CD8-positive, alpha-beta memory T cell (primary cell): ENCODE measurements at regions of chr3 and their contacts with region 1.

Region 1: DNA sequence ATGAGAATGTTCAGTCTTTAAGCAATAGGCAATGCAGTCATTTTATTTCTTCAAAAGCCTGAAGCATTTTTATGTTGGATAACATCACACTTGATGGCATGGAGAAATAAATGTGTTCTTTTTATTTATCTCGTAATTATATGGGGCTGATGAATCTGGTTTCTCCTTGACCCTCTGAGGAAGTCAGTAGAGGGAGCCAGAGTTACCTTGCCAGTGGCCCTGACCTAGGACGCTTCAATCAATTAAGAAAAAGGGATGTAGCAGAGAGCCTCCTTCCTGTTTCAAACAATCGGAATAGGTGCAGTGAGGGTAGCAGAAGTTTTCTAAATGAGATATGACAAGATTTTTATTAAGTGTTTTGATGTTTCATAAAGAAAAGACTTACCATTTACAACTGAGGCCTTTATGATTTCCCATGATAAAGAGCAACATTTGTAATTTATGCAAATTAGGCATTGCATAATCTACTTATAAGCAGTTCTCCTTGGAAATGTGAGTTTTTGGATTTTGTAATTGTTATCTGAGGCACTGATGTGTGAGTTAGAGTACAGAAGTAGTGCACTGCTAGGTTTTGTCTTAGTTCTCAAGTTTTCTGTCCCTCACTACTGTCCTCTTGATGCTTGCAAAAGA is 129.1 kb downstream of the RAP2B start:
- DNase-seq: peak in 1 of 5 donors; percentile 11
- H3K4me3 ChIP-seq: no peak overlapping the region
- H3K4me3 Mint-ChIP-seq: peak overlapping the region in 2 of 7 donors; percentile 10 to 50
- H3K27ac ChIP-seq: no peak overlapping the region
- H3K27ac Mint-ChIP-seq: peak overlapping the region in 3 of 8 donors; percentile 3 to 72 (median 56)
- H3K4me1 ChIP-seq: peaks cover 34% of the 10 kb centered on the region
- H3K4me1 Mint-ChIP-seq: peaks cover 38 to 50% (median 50%) of the 10 kb centered on the region in 3 donors
- H3K27me3 ChIP-seq: no peaks in the 10 kb centered on the region
- H3K27me3 Mint-ChIP-seq: no peaks in the 10 kb centered on the region

Region 2: DNA sequence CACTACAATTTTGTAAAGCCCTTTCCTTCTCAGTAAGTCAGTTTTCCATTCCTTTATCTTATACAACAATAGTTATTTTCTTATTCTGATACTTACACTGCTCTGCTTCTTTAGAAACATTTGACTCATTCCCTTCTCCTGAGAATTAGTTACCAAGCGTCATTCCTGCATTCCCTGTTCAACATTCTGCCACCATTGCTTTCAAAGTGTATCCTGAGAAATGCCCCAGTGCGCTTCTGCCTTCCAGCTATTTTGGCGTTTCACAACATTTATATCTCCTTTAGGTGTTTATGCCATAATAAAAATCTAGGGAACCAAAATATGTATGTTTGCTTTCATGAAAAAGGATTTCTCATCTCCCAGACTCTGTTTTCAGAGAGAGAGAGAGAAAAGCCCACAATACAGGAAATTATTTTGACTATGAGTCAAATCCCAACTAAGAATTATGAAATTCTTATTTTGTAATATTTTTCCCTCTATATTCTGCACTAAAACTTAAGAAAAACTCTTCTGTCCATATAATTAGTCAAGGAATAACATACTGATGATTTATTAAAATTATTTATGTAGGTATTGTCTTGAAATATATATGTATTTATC is 247.3 kb before region 1 on chr3:
- CTCF ChIA-PET with region 1: interaction called, 17 read pairs
- POLR2A ChIA-PET with region 1: no interaction called
- DNase-seq: no peak
- H3K4me3 ChIP-seq: no peak overlapping the region
- H3K4me3 Mint-ChIP-seq: no peak overlapping the region
- H3K27ac ChIP-seq: no peak overlapping the region
- H3K27ac Mint-ChIP-seq: no peak overlapping the region
- H3K4me1 ChIP-seq: no peaks in the 10 kb centered on the region
- H3K4me1 Mint-ChIP-seq: peaks cover 3 to 8% (median 4%) of the 10 kb centered on the region in 3 donors
- H3K27me3 ChIP-seq: no peaks in the 10 kb centered on the region
- H3K27me3 Mint-ChIP-seq: peaks cover 5 to 7% of the 10 kb centered on the region in 2 donors

Region 3: GRCh38 chr3:153055779-153056178 is 235.4 kb before region 1 on chr3:
- CTCF ChIA-PET with region 1: no interaction called
- POLR2A ChIA-PET with region 1: no interaction called
- DNase-seq: no peak
- H3K4me3 ChIP-seq: no peak overlapping the region
- H3K4me3 Mint-ChIP-seq: no peak overlapping the region
- H3K27ac ChIP-seq: no peak overlapping the region
- H3K27ac Mint-ChIP-seq: no peak overlapping the region
- H3K4me1 ChIP-seq: no peaks in the 10 kb centered on the region
- H3K4me1 Mint-ChIP-seq: no peaks in the 10 kb centered on the region
- H3K27me3 ChIP-seq: no peaks in the 10 kb centered on the region
- H3K27me3 Mint-ChIP-seq: peaks cover 0 to 3% of the 10 kb centered on the region in 2 donors

Region 4: DNA sequence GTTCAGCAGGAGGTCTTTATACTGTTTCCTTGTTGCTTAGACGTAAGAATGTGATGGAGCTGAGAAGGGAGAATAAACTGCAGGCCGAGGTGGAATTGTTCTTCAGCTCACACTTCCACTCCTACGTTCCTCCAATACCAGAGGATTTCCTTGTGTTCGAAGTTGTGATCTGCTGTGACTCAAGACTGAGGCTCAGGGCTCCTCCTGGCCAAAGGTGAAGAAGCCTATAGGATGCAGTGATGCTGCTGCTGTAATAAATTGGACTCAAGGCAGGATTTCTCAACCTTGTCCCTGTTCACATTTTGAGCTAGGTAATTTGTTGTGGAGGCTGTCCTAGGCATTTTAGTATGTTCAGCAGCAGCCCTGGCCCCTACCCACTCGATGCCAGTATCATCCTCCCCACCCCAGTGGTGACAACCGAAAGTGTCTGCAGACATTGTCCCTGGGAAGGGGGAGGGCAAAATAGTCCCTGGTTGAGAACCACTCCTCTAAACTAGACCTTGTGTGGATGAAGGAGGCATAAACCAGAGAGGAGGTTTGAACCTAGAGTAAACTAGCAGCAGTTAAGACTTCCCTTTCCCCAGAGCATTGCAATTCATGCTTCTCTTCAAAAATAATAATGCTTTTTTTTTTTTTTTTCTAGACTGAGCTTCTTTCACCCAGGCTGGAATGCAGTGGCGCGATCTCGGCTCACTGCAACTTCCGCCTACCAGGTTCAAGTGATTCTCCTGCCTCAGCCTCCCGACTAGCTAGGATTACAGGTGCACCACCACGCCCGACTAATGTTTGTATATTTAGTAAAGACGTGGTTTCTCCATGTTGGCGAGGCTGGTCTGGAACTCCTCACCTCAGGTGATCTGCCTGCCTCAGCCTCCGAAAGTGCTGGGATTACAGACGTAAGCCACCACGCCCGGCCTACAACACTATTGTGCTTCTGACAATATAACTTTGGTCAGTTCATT is 118.1 kb before region 1 on chr3:
- CTCF ChIA-PET with region 1: interaction called, 12 read pairs
- POLR2A ChIA-PET with region 1: no interaction called
- DNase-seq: no peak
- H3K4me3 ChIP-seq: no peak overlapping the region
- H3K4me3 Mint-ChIP-seq: no peak overlapping the region
- H3K27ac ChIP-seq: no peak overlapping the region
- H3K27ac Mint-ChIP-seq: peak overlapping the region in 7 of 8 donors; percentile 18 to 86 (median 68)
- H3K4me1 ChIP-seq: peaks cover 7% of the 10 kb centered on the region
- H3K4me1 Mint-ChIP-seq: peaks cover 47 to 62% (median 56%) of the 10 kb centered on the region in 3 donors
- H3K27me3 ChIP-seq: no peaks in the 10 kb centered on the region
- H3K27me3 Mint-ChIP-seq: no peaks in the 10 kb centered on the region

Region 5: GRCh38 chr3:153209596-153209995 is 81.6 kb before region 1 on chr3:
- CTCF ChIA-PET with region 1: interaction called, 20 read pairs
- POLR2A ChIA-PET with region 1: no interaction called
- DNase-seq: no peak
- H3K4me3 ChIP-seq: no peak overlapping the region
- H3K4me3 Mint-ChIP-seq: peak overlapping the region in 3 of 7 donors; percentile 26 to 68 (median 61)
- H3K27ac ChIP-seq: no peak overlapping the region
- H3K27ac Mint-ChIP-seq: peak overlapping the region in 2 of 8 donors; percentile 71 to 84
- H3K4me1 ChIP-seq: peaks cover 18% of the 10 kb centered on the region
- H3K4me1 Mint-ChIP-seq: peaks cover 32 to 52% (median 47%) of the 10 kb centered on the region in 3 donors
- H3K27me3 ChIP-seq: no peaks in the 10 kb centered on the region
- H3K27me3 Mint-ChIP-seq: peaks cover 0 to 2% of the 10 kb centered on the region in 2 donors

Region 6: DNA sequence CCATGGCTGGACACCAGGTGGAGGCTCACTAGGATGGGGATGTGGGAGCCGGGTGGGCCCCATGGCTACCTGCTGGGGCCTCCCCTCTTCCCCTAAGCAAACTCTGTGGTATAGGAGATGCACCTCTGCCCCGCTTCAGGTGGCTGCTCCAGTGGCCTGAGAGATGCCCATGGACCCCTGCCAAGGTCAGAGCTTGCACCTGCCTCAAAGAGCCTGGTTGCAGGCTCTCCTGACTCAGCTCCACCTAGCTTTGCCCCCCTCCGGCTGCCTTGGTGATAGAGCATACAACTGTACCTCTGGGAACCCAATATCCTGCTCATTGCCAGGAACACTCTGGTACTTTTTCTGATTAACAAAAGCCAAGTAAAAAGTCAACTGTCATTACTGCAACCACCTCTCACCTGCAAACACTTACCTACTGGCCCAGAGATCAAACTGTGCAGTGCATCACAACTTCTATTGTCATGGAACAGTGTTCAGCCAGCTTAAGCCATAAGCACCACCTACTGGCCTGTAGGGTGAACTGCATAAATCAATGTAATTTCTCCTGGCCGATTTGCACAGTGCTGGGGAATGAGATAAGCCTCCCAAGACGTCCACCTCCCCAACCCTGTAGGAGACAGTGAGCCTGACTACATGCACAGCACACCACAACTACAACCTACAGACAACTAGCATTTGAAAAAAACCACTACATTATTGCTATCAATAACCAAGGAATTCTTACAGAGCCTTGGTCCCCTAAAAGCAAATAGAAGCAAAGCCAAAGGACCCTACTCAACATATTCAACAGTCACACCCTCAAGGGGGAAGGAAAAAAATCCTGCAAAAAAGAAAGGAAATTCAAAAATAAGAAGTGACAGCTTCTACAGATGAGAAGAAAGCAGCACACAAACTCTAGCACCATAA is 477.6 kb after region 1 on chr3:
- CTCF ChIA-PET with region 1: interaction called, 12 read pairs
- POLR2A ChIA-PET with region 1: no interaction called
- DNase-seq: peak; percentile 25 to 57 (median 45)
- H3K4me3 ChIP-seq: no peak overlapping the region
- H3K4me3 Mint-ChIP-seq: no peak overlapping the region
- H3K27ac ChIP-seq: no peak overlapping the region
- H3K27ac Mint-ChIP-seq: peak overlapping the region in 1 of 8 donors; percentile 51
- H3K4me1 ChIP-seq: no peaks in the 10 kb centered on the region
- H3K4me1 Mint-ChIP-seq: peaks cover 0 to 5% (median 2%) of the 10 kb centered on the region in 3 donors
- H3K27me3 ChIP-seq: no peaks in the 10 kb centered on the region
- H3K27me3 Mint-ChIP-seq: peaks cover 5 to 30% of the 10 kb centered on the region in 2 donors